Left cardiac atrium (tissue), 4 donors: ENCODE measurements at regions of chr21 and their contacts with region 1.

Region 1: DNA sequence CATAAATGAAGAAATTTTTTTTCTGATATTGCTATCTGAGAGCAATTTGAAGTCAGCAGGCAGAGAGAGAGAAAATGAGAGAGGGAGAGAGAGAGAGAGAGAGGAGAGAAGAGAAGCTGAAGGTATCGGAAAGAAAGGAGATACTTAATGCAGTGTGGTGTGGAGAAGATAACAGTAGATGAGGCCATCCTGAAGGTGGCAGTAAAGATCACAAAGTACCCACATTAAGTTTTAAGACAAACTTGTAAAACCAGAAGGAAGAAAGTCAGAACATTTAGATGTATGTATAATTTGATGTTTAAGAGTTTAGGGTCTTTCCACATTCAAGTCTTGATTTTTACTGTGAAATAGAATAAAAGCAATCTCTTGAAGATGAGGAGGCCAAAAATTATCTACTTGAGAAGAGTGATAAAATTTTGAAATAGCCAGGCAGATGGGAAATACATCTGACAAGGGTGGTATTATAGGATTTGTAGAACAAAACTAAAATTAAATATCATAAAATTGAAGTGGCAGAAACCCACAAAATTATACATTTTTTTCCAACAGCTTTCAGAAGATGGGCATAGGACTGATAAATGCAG is 1753.4 kb downstream of the MRPL39 start:
- DNase-seq: no peak
- ATAC-seq: peak in 1 of 2 donors; percentile 27

Region 2: GRCh38 chr21:24045775-24046215 is 191.9 kb after region 1 on chr21:
- intact Hi-C with region 1: no loop called
- DNase-seq: peak; percentile 85
- ATAC-seq: peak; percentile 89 to 99

Region 3: DNA sequence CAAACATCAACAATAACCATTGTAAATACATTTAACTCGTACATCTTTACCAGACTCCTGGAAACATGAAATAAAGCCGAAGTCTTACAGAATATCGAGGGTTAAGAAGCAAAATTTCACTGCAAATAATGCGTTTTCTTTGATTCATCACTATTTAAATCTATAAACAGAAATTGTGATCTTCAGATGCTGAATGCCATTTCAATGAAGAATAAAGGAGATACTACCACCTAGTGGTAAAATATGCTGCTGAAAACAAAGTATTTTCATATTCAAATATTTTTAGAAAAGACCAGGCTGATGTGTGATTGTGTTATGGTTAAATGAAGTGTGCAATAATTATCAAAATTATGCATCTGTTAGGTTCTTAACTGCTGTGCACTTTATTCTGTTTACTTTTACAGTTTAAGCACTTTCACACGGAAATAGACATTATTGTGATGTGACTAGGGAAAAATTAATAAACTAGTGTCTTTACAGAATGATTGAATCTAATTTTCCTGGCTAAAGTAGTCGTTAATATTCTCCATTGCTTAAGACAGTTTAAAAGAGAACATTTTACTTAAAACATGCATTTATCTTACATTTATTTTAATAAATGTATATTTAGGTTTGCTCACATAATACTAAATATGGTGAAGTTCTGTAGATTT is 660.3 kb after region 1 on chr21:
- intact Hi-C with region 1: loop called (anchors 10 kb)
- DNase-seq: no peak
- ATAC-seq: no peak

Region 4: DNA sequence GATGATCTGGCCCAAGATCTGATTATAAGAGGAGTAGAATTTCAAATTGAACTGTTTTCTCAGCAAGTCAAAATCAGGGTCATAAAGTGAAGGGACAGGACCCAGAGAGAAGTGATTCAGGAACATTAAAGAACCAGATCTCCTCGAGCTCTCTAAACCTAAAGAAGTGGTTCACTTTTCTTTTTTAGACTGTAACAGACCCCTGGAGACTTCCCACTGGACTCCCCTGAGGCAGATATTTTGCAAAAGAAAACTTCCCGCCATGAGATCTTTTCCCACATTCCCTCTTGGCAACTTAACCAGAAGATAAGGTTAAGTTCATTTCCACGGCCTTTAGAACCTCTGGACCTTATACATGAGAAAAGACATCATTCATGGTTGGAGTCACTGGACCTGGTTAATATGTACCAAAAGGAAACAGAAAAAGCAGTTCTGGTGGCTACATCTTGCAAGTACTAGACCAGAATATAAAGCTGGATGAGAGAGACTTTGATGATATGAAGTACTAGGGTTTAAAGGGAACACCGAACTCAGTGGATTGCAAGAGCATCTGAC is 692.0 kb after region 1 on chr21:
- intact Hi-C with region 1: no loop called
- DNase-seq: no peak
- ATAC-seq: no peak